Esophagus muscularis mucosa (tissue), 4 donors: ENCODE measurements at regions of chr4 and their contacts with region 1.

Region 1: GRCh38 chr4:88211473-88212252 is 53.2 kb upstream of the ABCG2 start:
- DNase-seq: peak; percentile 85
- H3K4me3 ChIP-seq: no peak overlapping the region
- H3K27ac ChIP-seq: no peak overlapping the region
- H3K4me1 ChIP-seq: peaks cover 0 to 4% (median 0%) of the 10 kb centered on the region in 4 donors
- H3K27me3 ChIP-seq: no peaks in the 10 kb centered on the region
- CTCF ChIP-seq: peak; percentile 61 to 79 (median 67)
- EP300 ChIP-seq: no peak
- POLR2A ChIP-seq: no peak

Region 2: DNA sequence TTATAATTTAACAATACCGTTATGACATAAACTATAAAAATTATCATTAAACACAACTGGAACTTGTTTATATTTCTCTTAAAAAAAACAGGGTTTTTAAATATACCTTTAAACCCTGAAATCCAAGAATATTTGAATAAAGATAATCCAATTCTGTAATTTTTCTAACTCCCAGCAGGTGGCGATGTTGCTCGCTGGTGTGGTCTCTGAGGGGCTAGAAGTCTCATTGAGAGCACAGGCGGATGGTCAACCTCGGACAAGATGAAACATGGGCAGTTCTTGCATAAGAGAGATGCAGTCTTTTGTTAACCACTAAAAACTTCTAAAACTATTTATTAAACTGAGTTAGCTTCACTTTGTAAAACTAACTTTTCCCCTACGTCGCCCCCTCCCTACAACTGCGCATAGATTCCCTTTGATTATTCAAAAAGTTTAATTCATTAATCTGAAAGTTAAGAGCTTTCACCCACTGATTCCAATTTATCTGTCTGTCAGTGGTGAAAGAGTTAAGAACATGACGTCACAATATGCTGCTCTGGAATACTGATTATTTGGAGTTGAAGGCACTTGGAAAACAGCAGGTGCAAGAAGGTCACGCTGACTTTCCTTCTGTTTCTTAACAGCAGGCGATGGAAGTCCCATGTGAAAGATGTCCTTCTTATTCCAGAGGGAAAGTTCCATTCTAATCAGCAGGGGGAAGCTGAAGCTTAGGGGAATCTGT is 532.1 kb before region 1 on chr4:
- intact Hi-C with region 1: loop called (anchors 5 kb)
- DNase-seq: no peak
- H3K4me3 ChIP-seq: no peak overlapping the region
- H3K27ac ChIP-seq: no peak overlapping the region
- H3K4me1 ChIP-seq: peaks cover 0 to 6% (median 3%) of the 10 kb centered on the region in 4 donors
- H3K27me3 ChIP-seq: no peaks in the 10 kb centered on the region
- CTCF ChIP-seq: peak; percentile 73 to 78 (median 74)
- EP300 ChIP-seq: no peak
- POLR2A ChIP-seq: no peak

Region 3: DNA sequence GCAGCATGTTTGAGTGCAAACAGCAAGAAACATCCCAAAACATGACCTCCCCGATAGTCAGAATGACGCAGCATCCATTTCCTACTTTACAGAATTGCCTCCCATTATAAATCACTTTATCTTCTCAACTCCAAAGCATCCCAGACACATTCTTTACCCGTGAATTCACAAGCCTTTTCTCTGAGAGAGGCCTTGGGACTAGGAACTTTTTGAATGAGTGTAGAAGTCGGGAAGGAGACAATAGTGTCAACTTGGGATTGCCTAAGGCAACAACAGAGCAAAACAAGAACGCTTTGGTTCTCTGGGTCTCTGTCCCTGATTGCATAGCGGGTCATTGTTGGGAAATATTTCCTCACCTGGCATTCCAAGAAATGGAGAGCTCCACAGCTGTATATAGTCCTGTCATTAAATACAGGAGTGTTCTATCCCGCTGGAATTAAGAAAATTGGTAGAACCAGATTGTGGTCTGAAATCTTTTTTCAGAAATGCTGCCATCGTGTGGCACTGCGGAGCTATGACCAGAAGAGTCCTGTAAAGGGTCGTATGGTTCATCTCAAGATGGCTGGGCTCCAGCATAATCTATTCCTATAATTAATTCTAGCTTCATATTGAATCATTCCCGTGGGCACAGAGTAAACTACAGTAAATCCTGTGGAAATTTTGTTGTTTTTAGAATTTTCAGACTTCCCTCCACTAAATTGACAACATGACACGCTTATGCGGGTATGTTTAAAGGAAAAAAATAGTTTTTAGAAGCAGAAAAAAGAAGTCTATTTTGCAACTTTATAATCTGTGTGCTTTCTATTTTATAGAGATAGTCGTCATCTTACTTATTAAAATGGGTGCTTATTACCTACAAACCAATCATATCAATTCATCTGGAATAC is 238.1 kb before region 1 on chr4:
- intact Hi-C with region 1: loop called (anchors 5 kb)
- DNase-seq: no peak
- H3K4me3 ChIP-seq: peak overlapping the region in 3 of 4 donors; percentile 19 to 33 (median 19)
- H3K27ac ChIP-seq: peak overlapping the region in 1 of 4 donors; percentile 2
- H3K4me1 ChIP-seq: peaks cover 0 to 7% (median 3%) of the 10 kb centered on the region in 4 donors
- H3K27me3 ChIP-seq: no peaks in the 10 kb centered on the region
- CTCF ChIP-seq: peak; percentile 74 to 88 (median 85)
- EP300 ChIP-seq: no peak
- POLR2A ChIP-seq: no peak

Region 4: GRCh38 chr4:88378691-88379559 is 167.3 kb after region 1 on chr4 and contains the start of gene HERC6:
- intact Hi-C with region 1: loop called (anchors 5 kb)
- DNase-seq: no peak
- H3K4me3 ChIP-seq: peak within 1 kb of the TSS; percentile 76 to 100 (median 86)
- H3K27ac ChIP-seq: peak within 1 kb of the TSS; percentile 82 to 94 (median 87)
- H3K4me1 ChIP-seq: peaks cover 0 to 10% (median 5%) of the 10 kb centered on the region in 4 donors
- H3K27me3 ChIP-seq: no peaks in the 10 kb centered on the region
- CTCF ChIP-seq: peak; percentile 58 to 80 (median 66)
- EP300 ChIP-seq: no peak
- POLR2A ChIP-seq: no peak
- total RNA-seq, gene HERC6: 3.8 to 5.2 (median 4.9) TPM

Region 5: GRCh38 chr4:88846206-88846790 is 634.6 kb after region 1 on chr4:
- intact Hi-C with region 1: no loop called
- DNase-seq: no peak
- H3K4me3 ChIP-seq: no peak overlapping the region
- H3K27ac ChIP-seq: no peak overlapping the region
- H3K4me1 ChIP-seq: peaks cover 0 to 10% (median 8%) of the 10 kb centered on the region in 4 donors
- H3K27me3 ChIP-seq: no peaks in the 10 kb centered on the region
- CTCF ChIP-seq: no peak
- EP300 ChIP-seq: no peak
- POLR2A ChIP-seq: no peak